Sigmoid colon (tissue), 7 donors: ENCODE measurements at regions of chr22 and their contacts with region 1.

Region 1: GRCh38 chr22:49820984-49821383 is 6.7 kb downstream of the BRD1 start:
- DNase-seq: no peak
- H3K4me3 ChIP-seq: no peak overlapping the region
- H3K27ac ChIP-seq: peak overlapping the region; percentile 4 to 52 (median 41)
- H3K4me1 ChIP-seq: peaks cover 0 to 86% (median 78%) of the 10 kb centered on the region in 4 donors
- H3K27me3 ChIP-seq: no peaks in the 10 kb centered on the region
- CTCF ChIP-seq: peak in 1 of 4 experiments; percentile 20
- EP300 ChIP-seq: no peak
- POLR2A ChIP-seq: no peak

Region 2: DNA sequence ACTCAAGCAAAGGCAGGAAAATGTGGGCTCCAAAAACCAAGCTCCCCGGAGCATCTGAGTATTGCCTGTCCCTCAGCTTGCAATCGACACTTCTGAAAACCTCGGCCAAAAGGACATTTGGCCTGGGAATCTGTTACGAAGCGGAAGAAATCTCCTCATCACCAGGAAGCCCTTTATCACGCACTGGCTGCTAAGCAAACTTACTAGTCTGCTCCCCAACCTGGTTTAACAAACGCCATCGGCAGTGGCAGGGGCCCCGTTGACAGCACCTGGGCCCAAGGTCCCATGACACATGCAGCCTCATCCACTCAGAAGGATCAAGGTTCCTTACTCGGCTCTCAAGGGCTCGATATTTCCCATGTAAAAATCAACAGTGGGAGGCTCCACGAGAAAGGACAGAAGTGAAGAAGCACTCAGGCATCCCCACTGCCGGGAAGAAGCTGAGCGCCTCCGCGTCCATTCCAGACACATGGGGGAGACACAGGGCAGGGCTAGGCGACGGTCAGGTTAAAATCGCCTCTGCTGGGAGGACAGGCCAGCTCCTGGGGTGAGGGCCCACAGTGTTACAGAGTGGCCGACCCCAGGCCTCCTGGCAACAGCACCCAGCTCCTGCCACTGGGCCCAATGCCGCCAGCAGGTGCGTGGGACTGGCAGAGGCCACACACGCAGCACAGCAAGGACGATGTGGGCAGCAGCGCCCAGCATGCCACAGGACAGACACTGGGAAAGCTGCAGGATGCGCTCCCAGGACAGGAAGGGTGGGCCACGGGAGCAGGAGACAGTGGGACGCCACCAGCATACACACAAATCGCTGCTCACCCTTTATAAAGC is 20.4 kb before region 1 on chr22:
- intact Hi-C with region 1: loop called (anchors 2 kb)
- DNase-seq: no peak
- H3K4me3 ChIP-seq: no peak overlapping the region
- H3K27ac ChIP-seq: peak overlapping the region in 3 of 4 donors; percentile 10 to 69 (median 58)
- H3K4me1 ChIP-seq: peaks cover 0 to 57% (median 36%) of the 10 kb centered on the region in 4 donors
- H3K27me3 ChIP-seq: no peaks in the 10 kb centered on the region
- CTCF ChIP-seq: peak in 2 of 4 experiments; percentile 38 to 41
- EP300 ChIP-seq: no peak
- POLR2A ChIP-seq: no peak

Region 3: DNA sequence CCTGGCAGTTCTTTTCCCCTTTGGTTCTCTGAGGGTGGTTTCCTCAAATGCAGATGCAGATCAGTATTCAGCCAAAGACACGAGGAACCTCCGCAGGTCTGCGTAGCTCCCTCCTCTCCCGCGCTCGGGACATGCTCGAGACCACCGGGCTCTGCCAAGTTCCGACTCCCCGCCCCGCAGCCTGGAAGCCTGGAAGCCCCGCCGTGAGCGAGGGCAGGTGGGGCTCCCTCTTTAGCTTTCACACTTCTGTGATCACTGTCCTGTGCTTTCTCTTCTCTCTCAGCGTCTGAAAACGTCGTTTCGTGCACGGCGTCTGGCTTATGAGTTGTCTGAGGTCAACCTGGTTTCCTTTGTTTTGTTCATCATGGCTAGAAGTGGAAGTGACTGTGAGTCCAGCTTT is 59.3 kb after region 1 on chr22:
- intact Hi-C with region 1: no loop called
- DNase-seq: no peak
- H3K4me3 ChIP-seq: no peak overlapping the region
- H3K27ac ChIP-seq: no peak overlapping the region
- H3K4me1 ChIP-seq: no peaks in the 10 kb centered on the region
- H3K27me3 ChIP-seq: no peaks in the 10 kb centered on the region
- CTCF ChIP-seq: no peak
- EP300 ChIP-seq: no peak
- POLR2A ChIP-seq: no peak